ENCODE measurements at regions of chr10 and their contacts with region 1.

Region 1: GRCh38 chr10:101840741-101841453 is 2.7 kb downstream of the KCNIP2 start:
- DNase-seq: peak; percentile 56
- H3K4me3 ChIP-seq: peak overlapping the region; percentile 54
- H3K27ac ChIP-seq: no peak overlapping the region
- H3K27me3 ChIP-seq: peaks cover 3% of the 10 kb centered on the region
- CTCF ChIP-seq: peak; percentile 96

Region 2: GRCh38 chr10:101272229-101272868 is 568.5 kb before region 1 on chr10:
- CTCF ChIA-PET with region 1: no interaction called
- POLR2A ChIA-PET with region 1: no interaction called
- DNase-seq: peak; percentile 21
- H3K4me3 ChIP-seq: no peak overlapping the region
- H3K27ac ChIP-seq: no peak overlapping the region
- H3K27me3 ChIP-seq: peaks cover 17% of the 10 kb centered on the region
- CTCF ChIP-seq: peak; percentile 79

Region 3: DNA sequence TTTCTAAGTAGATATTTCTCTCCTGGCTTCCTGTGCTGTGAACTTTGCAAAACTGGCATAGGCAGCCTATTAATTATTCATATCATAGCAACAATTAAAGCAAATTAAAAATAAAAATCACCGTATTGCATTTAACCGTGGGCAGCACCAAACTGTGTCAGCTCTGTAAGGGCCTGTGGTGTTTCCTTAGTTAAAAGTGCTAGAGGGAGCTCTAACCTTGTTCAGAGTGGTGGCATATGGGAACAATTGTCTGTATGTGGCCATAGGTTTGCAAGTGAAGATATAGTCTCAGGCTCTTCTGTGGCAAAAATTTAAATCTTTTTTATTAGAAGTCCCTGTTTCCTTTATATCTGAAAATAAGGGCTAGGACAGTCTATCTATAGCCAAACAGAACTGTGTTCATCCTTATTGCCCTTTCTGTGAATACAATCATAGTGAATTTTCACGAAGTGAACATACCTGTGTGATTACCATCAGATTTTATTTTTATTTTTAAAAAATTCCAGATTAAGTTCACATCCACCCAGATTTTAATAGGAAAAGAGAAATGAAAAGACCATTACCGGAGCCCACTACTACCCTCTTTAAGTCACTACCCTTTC is 345.5 kb before region 1 on chr10:
- CTCF ChIA-PET with region 1: no interaction called
- POLR2A ChIA-PET with region 1: no interaction called
- DNase-seq: no peak
- H3K4me3 ChIP-seq: no peak overlapping the region
- H3K27ac ChIP-seq: no peak overlapping the region
- H3K27me3 ChIP-seq: no peaks in the 10 kb centered on the region
- CTCF ChIP-seq: peak; percentile 28

Region 4: GRCh38 chr10:101879456-101880231 is 38.7 kb after region 1 on chr10:
- CTCF ChIA-PET with region 1: interaction called, 19 read pairs
- POLR2A ChIA-PET with region 1: interaction called, 7 read pairs
- DNase-seq: peak; percentile 81
- H3K4me3 ChIP-seq: no peak overlapping the region
- H3K27ac ChIP-seq: peak overlapping the region; percentile 92
- H3K27me3 ChIP-seq: no peaks in the 10 kb centered on the region
- CTCF ChIP-seq: no peak

Region 5: DNA sequence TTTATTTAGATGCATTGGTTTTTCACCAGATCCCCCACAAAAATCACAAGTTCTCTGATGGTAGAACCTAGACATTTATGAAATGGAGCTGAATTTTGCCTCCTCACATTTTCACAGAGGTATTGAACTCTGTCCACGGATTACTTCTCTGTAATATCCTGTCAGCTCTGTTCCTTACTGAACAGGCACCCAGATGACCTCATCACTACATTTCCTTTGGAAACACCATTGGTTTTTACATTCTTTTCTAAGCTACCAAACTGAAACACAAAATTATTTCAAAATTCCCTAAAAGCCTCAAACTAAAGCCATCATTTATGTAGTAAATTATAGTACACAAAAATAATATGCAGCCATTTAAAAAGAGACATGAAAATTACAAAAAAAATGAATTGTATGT is 101.0 kb after region 1 on chr10:
- CTCF ChIA-PET with region 1: interaction called, 13 read pairs
- POLR2A ChIA-PET with region 1: no interaction called
- DNase-seq: no peak
- H3K4me3 ChIP-seq: no peak overlapping the region
- H3K27ac ChIP-seq: no peak overlapping the region
- H3K27me3 ChIP-seq: no peaks in the 10 kb centered on the region
- CTCF ChIP-seq: no peak

Region 6: GRCh38 chr10:102009801-102010425 is 169.0 kb after region 1 on chr10:
- CTCF ChIA-PET with region 1: interaction called, 256 read pairs
- POLR2A ChIA-PET with region 1: interaction called, 3 read pairs
- DNase-seq: peak; percentile 87
- H3K4me3 ChIP-seq: no peak overlapping the region
- H3K27ac ChIP-seq: no peak overlapping the region
- H3K27me3 ChIP-seq: no peaks in the 10 kb centered on the region
- CTCF ChIP-seq: peak; percentile 100

Region 7: DNA sequence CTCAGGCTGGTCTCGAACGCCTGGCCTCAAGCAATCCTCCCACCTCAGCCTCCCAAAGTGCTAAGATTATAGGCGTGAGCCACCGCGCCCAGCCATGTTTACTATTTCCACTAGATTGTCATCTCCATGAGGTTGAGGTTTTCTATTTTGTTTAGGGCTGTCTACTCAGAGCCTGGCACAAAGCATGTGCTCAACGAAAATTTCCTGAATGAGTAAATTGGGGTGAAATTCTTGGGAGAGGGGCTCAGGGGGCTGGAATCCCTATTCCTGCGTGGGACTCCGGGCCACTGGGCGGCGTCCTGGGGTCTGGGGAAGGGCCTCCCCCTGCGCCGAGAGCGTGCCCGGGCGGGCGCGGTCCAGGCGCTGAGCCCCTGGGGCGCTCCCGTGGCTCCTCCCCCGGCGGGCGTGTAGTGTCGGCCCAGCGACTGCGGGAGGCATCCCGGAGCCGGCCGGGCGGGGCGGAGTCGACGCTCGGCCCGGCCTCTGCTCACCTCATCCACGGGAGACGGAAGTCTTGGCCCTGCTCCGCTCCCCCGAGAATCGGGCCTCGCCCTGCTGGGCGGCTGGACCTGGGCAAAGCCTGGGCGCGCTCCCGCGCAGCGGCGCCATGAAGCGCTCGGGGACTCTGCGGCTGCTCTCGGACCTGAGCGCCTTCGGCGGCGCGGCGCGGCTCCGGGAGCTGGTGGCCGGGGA is 224.1 kb after region 1 on chr10 and contains the start of gene HPS6:
- CTCF ChIA-PET with region 1: interaction called, 17 read pairs
- POLR2A ChIA-PET with region 1: no interaction called
- DNase-seq: peak; percentile 51
- H3K4me3 ChIP-seq: peak within 1 kb of the TSS; percentile 79
- H3K27ac ChIP-seq: peak within 1 kb of the TSS; percentile 52
- H3K27me3 ChIP-seq: no peaks in the 10 kb centered on the region
- CTCF ChIP-seq: no peak
- polyA plus RNA-seq, gene HPS6: 6.4 and 9.0 TPM in 2 replicates

Measured in AG04450 (cell line).